Heart left ventricle (tissue), 16 donors: ENCODE measurements at regions of chr6 and their contacts with region 1.

Region 1: DNA sequence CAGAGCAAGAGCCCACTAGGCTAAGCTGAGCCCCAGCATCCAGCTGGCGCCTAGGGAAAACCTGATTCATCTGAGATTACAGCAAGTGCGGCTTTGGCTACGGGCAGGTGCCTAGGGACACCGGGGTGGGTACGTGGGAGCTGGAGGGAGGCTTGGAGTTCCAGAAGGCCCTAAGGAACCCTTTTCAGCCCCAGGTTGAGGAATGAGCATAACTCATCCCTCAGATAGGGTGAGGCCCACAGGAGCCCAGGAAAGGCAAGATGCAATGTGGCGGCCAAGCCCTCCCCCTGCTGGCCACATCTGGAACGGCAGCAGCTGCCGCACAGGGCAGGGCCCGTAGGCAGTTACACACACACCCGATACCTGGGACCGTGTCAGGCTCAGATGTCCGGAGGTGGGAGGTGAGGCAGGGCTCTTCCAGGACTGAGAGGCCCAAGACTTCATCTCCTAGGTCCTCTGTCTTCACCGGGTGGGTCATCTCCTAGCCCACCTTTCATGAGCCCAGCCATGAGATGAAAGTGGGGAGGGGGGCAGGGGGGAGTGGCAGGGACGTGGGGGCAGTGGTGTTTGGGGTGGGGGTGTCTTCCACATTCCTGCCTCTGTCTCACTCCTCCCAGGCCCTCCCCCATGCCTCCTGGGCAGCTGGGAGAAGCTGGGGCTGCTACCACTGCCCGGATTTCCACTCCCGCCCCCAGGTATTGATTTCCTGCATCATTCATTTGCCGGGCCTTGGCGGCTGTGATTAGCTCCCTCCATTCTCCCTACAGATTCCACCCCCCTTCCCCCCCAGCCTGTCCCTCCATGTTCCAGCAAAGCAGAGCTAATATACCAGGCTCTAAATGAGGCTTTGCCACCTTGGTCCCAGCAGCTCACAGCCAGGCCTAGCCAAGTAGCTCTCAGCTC is 5.5 kb downstream of the MDGA1 start:
- DNase-seq: peak; percentile 62 to 81 (median 68)
- ATAC-seq: peak; percentile 62 to 87 (median 86)
- H3K4me3 ChIP-seq: no peak overlapping the region
- H3K27ac ChIP-seq: no peak overlapping the region
- H3K4me1 ChIP-seq: peaks cover 6 to 19% (median 15%) of the 10 kb centered on the region in 12 donors
- H3K27me3 ChIP-seq: peaks cover 0 to 48% (median 23%) of the 10 kb centered on the region in 9 donors
- CTCF ChIP-seq: peak; percentile 91 to 98 (median 96)
- POLR2A ChIP-seq: no peak

Region 2: DNA sequence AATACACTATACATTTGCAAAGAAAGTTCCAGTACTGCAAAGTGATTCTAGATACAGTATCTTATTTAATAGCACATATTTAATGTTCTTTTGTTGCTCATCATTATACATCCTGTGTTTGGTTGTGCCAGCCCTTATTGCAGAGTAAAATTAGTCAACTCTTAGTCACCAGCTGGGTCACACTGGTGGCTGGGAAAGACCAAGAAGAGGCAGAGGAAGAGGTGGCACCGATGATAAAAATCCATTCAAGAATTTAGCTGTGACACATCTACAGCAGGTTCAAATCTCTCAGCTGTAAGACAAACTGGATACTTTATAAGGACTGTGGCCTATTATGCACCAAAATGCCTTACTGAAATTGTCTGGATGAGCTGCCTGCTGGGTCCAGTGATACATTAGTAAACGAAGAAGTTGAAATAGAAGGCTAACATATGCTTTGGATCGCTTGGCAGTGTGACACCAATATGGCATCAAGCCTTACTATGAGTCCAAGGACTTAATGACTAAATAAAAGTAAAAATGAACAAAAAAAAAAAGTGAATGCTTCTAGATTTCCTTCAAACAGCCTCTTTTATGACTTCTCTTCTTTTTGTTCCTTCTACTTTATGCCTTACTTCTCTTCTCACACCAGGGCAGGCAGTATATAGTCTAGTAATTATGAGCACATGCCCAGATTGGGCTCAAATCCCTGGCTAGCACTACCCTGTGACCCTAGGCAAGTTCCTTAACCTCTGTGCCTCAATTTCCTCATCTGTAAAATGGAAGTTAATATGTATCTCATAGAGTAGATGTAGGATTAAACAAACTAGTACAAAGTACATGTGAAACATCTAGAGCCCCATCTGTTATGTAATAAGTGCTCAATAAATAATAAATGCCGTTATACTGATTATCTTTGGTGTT is 367.8 kb before region 1 on chr6:
- intact Hi-C with region 1: loop called (anchors 1 to 10 kb)
- DNase-seq: no peak
- ATAC-seq: no peak
- H3K4me3 ChIP-seq: no peak overlapping the region
- H3K27ac ChIP-seq: no peak overlapping the region
- H3K4me1 ChIP-seq: peaks cover 0 to 19% (median 10%) of the 10 kb centered on the region in 12 donors
- H3K27me3 ChIP-seq: no peaks in the 10 kb centered on the region
- CTCF ChIP-seq: no peak
- POLR2A ChIP-seq: no peak

Region 3: DNA sequence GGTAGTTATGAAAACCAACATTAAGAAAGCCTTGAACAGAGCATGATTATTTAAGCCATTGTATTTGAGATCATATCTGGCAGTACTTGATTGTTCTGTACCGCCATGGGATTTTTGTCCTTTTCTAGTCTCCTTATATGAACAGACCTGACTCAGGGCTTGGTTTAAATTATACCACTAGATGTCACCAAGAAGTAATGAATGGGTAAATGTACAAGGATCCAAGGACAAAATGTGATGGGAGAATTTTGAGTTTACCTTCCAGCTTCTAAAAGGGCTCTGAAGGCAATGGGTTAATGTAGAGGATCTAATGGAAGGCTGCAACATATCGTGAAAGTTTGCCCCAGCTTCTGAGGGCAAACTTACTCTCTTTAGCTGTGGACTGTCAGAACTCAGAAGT is 326.4 kb before region 1 on chr6:
- intact Hi-C with region 1: loop called in 1 of 10 experiments (anchors 5 kb)
- DNase-seq: no peak
- ATAC-seq: peak; percentile 48 to 62 (median 56)
- H3K4me3 ChIP-seq: no peak overlapping the region
- H3K27ac ChIP-seq: no peak overlapping the region
- H3K4me1 ChIP-seq: peaks cover 0 to 40% (median 26%) of the 10 kb centered on the region in 12 donors
- H3K27me3 ChIP-seq: no peaks in the 10 kb centered on the region
- CTCF ChIP-seq: peak in 9 of 12 donors; percentile 17 to 53 (median 41)
- POLR2A ChIP-seq: no peak

Region 4: GRCh38 chr6:37381579-37381978 is 310.6 kb before region 1 on chr6:
- intact Hi-C with region 1: loop called in 9 of 10 experiments (anchors 5 to 10 kb)
- DNase-seq: no peak
- ATAC-seq: peak in 3 of 4 donors; percentile 45 to 62 (median 53)
- H3K4me3 ChIP-seq: no peak overlapping the region
- H3K27ac ChIP-seq: no peak overlapping the region
- H3K4me1 ChIP-seq: no peaks in the 10 kb centered on the region
- H3K27me3 ChIP-seq: no peaks in the 10 kb centered on the region
- CTCF ChIP-seq: peak; percentile 38 to 68 (median 54)
- POLR2A ChIP-seq: no peak

Region 5: DNA sequence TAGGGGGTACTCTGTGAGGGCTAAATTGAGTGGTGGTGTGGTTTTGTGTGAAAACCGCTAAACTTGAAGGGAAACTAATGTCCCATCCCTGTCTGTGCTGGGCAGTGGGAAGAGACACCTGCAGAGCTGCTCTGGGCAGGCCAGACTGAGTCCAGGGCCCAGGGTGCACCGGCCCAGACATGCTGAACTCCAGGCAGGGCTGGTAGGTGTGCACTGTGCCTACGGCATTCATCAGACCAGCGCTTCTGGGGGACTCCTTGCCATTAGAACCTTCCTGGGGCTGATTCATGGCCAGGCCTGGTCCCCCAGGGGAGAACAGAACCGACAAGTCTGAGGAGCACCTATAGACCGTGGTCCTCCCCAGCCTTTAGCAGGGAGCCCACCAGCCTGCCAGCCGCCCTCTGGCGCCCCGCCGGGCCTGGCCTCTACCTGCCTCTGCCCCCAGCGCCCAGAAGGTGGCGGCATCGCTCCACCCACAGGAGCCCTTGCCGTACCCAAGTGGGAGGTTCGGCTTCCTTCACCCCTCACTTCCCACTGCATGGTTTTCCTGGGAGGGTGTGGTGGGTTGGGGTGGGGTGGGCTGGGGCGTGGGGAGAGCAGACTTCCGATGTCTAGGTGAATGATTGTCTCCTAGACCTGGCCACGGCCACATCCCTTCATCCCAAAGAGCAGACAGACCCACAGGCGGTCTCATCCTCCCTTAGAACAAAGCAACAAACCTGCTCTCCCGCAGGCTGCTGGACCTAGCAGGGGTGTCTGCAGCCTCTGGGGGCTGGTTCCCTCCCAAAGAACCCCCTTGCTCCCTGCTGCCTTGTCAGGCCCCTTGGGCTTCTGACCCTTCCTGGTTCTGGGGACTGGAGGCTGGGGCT is 208.0 kb before region 1 on chr6:
- intact Hi-C with region 1: loop called (anchors 1 to 5 kb)
- DNase-seq: peak; percentile 53 to 81 (median 60)
- ATAC-seq: peak; percentile 28 to 72 (median 64)
- H3K4me3 ChIP-seq: no peak overlapping the region
- H3K27ac ChIP-seq: no peak overlapping the region
- H3K4me1 ChIP-seq: peaks cover 0 to 39% (median 8%) of the 10 kb centered on the region in 12 donors
- H3K27me3 ChIP-seq: no peaks in the 10 kb centered on the region
- CTCF ChIP-seq: peak; percentile 65 to 83 (median 76)
- POLR2A ChIP-seq: no peak

Region 6: GRCh38 chr6:37489660-37490361 is 202.3 kb before region 1 on chr6:
- intact Hi-C with region 1: loop called in 3 of 10 experiments (anchors 2 to 5 kb)
- DNase-seq: peak in 1 of 5 donors; percentile 65
- ATAC-seq: peak; percentile 41 to 61 (median 54)
- H3K4me3 ChIP-seq: no peak overlapping the region
- H3K27ac ChIP-seq: peak overlapping the region in 2 of 12 donors; percentile 3 to 29
- H3K4me1 ChIP-seq: peaks cover 0 to 37% (median 25%) of the 10 kb centered on the region in 12 donors
- H3K27me3 ChIP-seq: no peaks in the 10 kb centered on the region
- CTCF ChIP-seq: peak in 7 of 12 donors; percentile 8 to 32 (median 24)
- POLR2A ChIP-seq: no peak

Region 7: GRCh38 chr6:37538107-37538506 is 154.0 kb before region 1 on chr6:
- intact Hi-C with region 1: no loop called
- DNase-seq: no peak
- ATAC-seq: peak in 1 of 4 donors; percentile 11
- H3K4me3 ChIP-seq: no peak overlapping the region
- H3K27ac ChIP-seq: no peak overlapping the region
- H3K4me1 ChIP-seq: peaks cover 0 to 18% (median 13%) of the 10 kb centered on the region in 12 donors
- H3K27me3 ChIP-seq: peaks cover 0 to 42% (median 19%) of the 10 kb centered on the region in 9 donors
- CTCF ChIP-seq: peak in 2 of 12 donors; percentile 8 to 23
- POLR2A ChIP-seq: no peak

Region 8: DNA sequence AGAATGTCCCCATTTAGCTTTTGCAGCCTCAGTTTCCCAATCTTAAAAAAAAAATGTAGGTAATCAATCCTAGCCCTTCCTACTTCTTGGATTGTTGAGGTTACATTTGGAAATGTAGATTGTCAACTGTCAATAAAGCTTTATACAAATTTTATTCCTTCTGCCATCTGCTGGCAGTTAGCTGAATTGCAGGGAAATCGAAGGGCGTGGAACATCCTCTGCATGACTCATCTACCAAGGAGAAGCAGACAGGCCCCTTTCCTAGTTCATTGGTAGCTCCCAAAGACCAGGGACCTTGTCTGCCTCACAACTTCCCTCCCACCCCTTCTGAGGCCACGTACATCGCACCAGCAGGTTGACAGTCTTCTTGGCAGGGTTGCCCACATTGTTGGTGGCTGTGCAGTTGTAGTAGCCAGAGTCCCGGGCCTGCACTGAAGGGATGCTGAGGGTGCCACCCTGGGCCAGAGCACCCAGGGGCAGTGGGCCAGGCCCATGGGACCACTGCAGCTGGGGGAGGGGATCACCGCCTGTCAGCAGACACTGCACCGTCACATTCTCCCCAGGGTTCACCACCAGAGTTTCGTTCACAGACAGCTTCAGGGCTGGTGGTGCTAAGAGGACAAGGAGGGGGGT is 38.1 kb before region 1 on chr6:
- intact Hi-C with region 1: loop called in 1 of 10 experiments (anchors 5 kb)
- DNase-seq: no peak
- ATAC-seq: no peak
- H3K4me3 ChIP-seq: no peak overlapping the region
- H3K27ac ChIP-seq: no peak overlapping the region
- H3K4me1 ChIP-seq: peaks cover 0 to 33% (median 3%) of the 10 kb centered on the region in 12 donors
- H3K27me3 ChIP-seq: peaks cover 0 to 9% (median 4%) of the 10 kb centered on the region in 9 donors
- CTCF ChIP-seq: peak in 10 of 12 donors; percentile 27 to 51 (median 46)
- POLR2A ChIP-seq: no peak

Region 9: DNA sequence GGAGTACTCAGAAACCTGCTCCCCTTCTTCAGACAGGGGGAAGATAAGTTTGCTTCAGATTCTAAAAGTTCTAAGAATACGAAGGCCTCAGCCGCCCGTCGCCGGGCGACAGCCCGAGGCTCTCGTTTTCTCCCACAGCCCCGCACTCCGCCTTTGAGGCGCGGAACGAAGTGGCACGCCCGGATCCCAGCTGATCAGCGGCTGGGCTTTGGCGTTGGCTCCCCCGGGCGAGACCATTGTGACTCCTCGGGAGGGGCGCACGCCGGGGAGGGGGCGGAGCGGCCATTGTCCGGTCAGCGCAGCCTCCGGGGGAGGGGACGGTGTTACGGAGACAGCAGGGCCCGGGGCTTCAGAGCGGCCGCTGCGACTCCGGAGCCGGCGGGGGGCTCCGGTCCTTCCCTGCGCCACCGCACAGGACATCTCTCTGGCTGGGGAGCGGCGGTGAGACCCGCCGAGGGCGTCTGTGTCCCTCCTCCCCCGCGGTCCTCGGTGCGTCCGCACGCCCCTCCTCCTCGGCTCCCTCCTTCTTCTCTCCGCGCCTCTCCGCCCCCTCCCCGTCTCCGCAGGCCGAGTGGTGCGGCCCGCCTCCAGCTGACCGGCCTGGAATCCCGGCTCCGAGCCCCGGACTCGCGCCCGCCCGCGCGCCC is 127.1 kb after region 1 on chr6 and contains the start of gene ZFAND3:
- intact Hi-C with region 1: no loop called
- DNase-seq: peak; percentile 98
- ATAC-seq: peak; percentile 95 to 97 (median 96)
- H3K4me3 ChIP-seq: peak within 1 kb of the TSS; percentile 59 to 96 (median 86)
- H3K27ac ChIP-seq: peak within 1 kb of the TSS; percentile 84 to 100 (median 98)
- H3K4me1 ChIP-seq: peaks cover 7 to 50% (median 38%) of the 10 kb centered on the region in 12 donors
- H3K27me3 ChIP-seq: no peaks in the 10 kb centered on the region
- CTCF ChIP-seq: no peak
- POLR2A ChIP-seq: peak in 1 of 2 donors; percentile 30
- total RNA-seq, gene ZFAND3: 36.0 to 114 (median 100) TPM